ENCODE measurements at regions of chr10 and their contacts with region 1.

Region 1: GRCh38 chr10:5889624-5890451 is at the starts of genes ANKRD16 and FBH1:
- DNase-seq: peak; percentile 99
- ATAC-seq: peak; percentile 89
- H3K4me3 ChIP-seq: peak within 1 kb of the TSS; percentile 99
- H3K27ac ChIP-seq: peak within 1 kb of the TSS; percentile 90
- H3K4me1 ChIP-seq: peaks cover 14% of the 10 kb centered on the region
- H3K27me3 ChIP-seq: no peaks in the 10 kb centered on the region
- CTCF ChIP-seq: no peak; the same call in 1 of the 2 replicates
- POLR2A ChIP-seq: peak; percentile 89
- RAD21 ChIP-seq: no peak
- total RNA-seq, gene ANKRD16: 3.3 and 5.7 TPM in 2 replicates
- total RNA-seq, gene FBH1: 60.8 and 72.2 TPM in 2 replicates

Region 2: GRCh38 chr10:5813287-5814109 is 76.3 kb before region 1 on chr10 and contains the start of gene GDI2:
- CTCF ChIA-PET with region 1: no interaction called
- POLR2A ChIA-PET with region 1: interaction called, 3 read pairs
- dilution Hi-C with region 1: no loop called
- in situ Hi-C with region 1: no loop called
- intact Hi-C with region 1: loop called (anchors 5 kb)
- DNase-seq: peak; percentile 95
- ATAC-seq: peak; percentile 97
- H3K4me3 ChIP-seq: peak within 1 kb of the TSS; percentile 81
- H3K27ac ChIP-seq: peak within 1 kb of the TSS; percentile 99
- H3K4me1 ChIP-seq: peaks cover 5% of the 10 kb centered on the region
- H3K27me3 ChIP-seq: no peaks in the 10 kb centered on the region
- CTCF ChIP-seq: no peak
- POLR2A ChIP-seq: peak; percentile 96
- RAD21 ChIP-seq: no peak
- total RNA-seq, gene GDI2: 396 and 608 TPM in 2 replicates

Region 3: GRCh38 chr10:5927306-5927705 is 37.5 kb after region 1 on chr10:
- CTCF ChIA-PET with region 1: no interaction called
- POLR2A ChIA-PET with region 1: no interaction called
- dilution Hi-C with region 1: no loop called
- in situ Hi-C with region 1: no loop called
- intact Hi-C with region 1: loop called (anchors 5 kb)
- DNase-seq: peak; percentile 92
- ATAC-seq: peak; percentile 91
- H3K4me3 ChIP-seq: no peak overlapping the region
- H3K27ac ChIP-seq: peak overlapping the region; percentile 18; the same call in 1 of the 2 replicates
- H3K4me1 ChIP-seq: peaks cover 14% of the 10 kb centered on the region
- H3K27me3 ChIP-seq: no peaks in the 10 kb centered on the region
- CTCF ChIP-seq: no peak
- POLR2A ChIP-seq: no peak
- RAD21 ChIP-seq: no peak

Measured in IMR-90 (cell line).